PC-3 (cell line): ENCODE measurements at regions of chr3 and their contacts with region 1.

Region 1: GRCh38 chr3:78645628-78646310 is 1122.0 kb downstream of the ROBO1 start:
- DNase-seq: peak; percentile 93
- ATAC-seq: peak; percentile 79
- H3K4me3 ChIP-seq: no peak overlapping the region
- H3K27ac ChIP-seq: no peak overlapping the region
- H3K4me1 ChIP-seq: peaks cover 13% of the 10 kb centered on the region
- H3K27me3 ChIP-seq: no peaks in the 10 kb centered on the region
- CTCF ChIP-seq: peak; percentile 97

Region 2: DNA sequence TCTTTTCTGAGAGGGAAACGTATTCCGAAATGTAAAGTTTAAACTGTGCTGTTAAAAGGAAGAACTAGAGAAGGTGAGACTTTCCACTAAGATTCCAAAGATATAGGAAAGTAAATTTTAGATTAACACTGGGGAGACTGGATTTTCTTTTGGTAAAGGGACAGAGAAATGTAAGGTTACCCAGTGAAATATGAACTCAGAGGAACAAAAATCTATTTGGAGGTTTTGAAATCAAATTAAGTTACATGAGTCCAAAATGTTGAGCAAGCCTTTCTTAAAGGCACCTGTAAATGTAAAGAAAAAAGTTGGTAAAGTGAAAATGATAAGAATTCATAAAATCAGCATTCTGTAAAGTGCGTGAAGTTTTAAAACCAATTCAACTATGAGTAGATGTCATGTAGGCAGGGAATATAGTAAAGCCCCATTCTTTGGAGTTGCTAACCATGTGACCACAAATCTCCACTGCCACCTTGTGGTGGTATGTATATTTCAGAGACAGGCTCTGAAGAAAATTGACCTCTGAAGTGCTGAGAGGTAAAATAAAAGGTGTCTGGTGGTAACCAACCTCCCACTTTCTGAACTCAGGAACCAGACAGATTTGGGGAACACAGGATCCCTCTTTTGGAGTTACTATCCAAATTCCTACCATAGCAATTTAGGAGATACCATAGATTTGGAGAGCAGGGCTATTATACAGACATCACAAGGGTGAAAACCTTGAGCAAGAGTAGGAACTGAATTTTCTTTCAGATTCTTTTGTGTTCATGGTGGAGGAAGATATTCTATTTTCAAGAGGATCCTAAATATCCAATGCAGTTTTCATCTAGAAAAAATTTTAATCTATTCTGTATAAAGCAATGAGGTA is 1390.6 kb before region 1 on chr3:
- CTCF ChIA-PET with region 1: no interaction called
- POLR2A ChIA-PET with region 1: no interaction called
- intact Hi-C with region 1: loop called (anchors 5 kb)
- DNase-seq: peak; percentile 80
- ATAC-seq: peak; percentile 83
- H3K4me3 ChIP-seq: no peak overlapping the region
- H3K27ac ChIP-seq: no peak overlapping the region
- H3K4me1 ChIP-seq: no peaks in the 10 kb centered on the region
- H3K27me3 ChIP-seq: peaks cover 57% of the 10 kb centered on the region
- CTCF ChIP-seq: peak; percentile 86

Region 3: GRCh38 chr3:78204977-78205376 is 440.8 kb before region 1 on chr3:
- CTCF ChIA-PET with region 1: interaction called, 5 read pairs
- POLR2A ChIA-PET with region 1: no interaction called
- intact Hi-C with region 1: loop called (anchors 5 kb)
- DNase-seq: peak; percentile 82
- ATAC-seq: peak; percentile 81
- H3K4me3 ChIP-seq: peak overlapping the region; percentile 51
- H3K27ac ChIP-seq: 0 out of 2 replicates have a peak overlapping the region, but pooled peaks have one; percentile 6
- H3K4me1 ChIP-seq: peaks cover 4% of the 10 kb centered on the region; the same call in 1 of the 2 replicates
- H3K27me3 ChIP-seq: no peaks in the 10 kb centered on the region
- CTCF ChIP-seq: peak; percentile 77

Region 4: GRCh38 chr3:78274475-78275065 is 371.2 kb before region 1 on chr3:
- CTCF ChIA-PET with region 1: interaction called, 12 read pairs
- POLR2A ChIA-PET with region 1: no interaction called
- intact Hi-C with region 1: loop called (anchors 1 kb)
- DNase-seq: peak; percentile 19
- ATAC-seq: peak; percentile 70
- H3K4me3 ChIP-seq: no peak overlapping the region
- H3K27ac ChIP-seq: no peak overlapping the region
- H3K4me1 ChIP-seq: no peaks in the 10 kb centered on the region
- H3K27me3 ChIP-seq: no peaks in the 10 kb centered on the region
- CTCF ChIP-seq: 0 out of 2 replicates have a peak, but pooled peaks have one; percentile 29

Region 5: DNA sequence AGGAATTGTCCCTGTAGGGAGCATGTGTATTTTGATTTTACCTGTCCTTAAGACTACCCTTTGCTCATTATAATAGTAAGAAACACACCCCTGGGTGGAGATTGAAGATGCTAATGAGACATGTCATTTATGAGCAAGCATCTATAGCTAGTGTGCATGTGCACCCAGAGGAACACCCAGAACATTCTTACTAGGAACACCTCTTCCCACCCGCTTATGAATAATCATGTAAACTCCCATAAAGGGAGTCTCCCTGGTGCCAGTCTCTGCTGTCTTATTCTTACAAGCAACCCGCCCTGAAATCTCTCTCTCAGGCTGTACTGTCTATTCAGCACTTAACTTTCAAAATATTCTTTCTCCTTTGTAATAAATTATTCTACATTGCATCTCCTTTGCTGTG is 105.3 kb before region 1 on chr3:
- CTCF ChIA-PET with region 1: no interaction called
- POLR2A ChIA-PET with region 1: no interaction called
- intact Hi-C with region 1: no loop called
- DNase-seq: no peak
- ATAC-seq: 0 out of 2 replicates have a peak, but pooled peaks have one; percentile 20
- H3K4me3 ChIP-seq: no peak overlapping the region
- H3K27ac ChIP-seq: no peak overlapping the region
- H3K4me1 ChIP-seq: no peaks in the 10 kb centered on the region
- H3K27me3 ChIP-seq: no peaks in the 10 kb centered on the region
- CTCF ChIP-seq: no peak